GM12878 (cell line): ENCODE measurements at regions of chr19 and their contacts with region 1.

Region 1: DNA sequence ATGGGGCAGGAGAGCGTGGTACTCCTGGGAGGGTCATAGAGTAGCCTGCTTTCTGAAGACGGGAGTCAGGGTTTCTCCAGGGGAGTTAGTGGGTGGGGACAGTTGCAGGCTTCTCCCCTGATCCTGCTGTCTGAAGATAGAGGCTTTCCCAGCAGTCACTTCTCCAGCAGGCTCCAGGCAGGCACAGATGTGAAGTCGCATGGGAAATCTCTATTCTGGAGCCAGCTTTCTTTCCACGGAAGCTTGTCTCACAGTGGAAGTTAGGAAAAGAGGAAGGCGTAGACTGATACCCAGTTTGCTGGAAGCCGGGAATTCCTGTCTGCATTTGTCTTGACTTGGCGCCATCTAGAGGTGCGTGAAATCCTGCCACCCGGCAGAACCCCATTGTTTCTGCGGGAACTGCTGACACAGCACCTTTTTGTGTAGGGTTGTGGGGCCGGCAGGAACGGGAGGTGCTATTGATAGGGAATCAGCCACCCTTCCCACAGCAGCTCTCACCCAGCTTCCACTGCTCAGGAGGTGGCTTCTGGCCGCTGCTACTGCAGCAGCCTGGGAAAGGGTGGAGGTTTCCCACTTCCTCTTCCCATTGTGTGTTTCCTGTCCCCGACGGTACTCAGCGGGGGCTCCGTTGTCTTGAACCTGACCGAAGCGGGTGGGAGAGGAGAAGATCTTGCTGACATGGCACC is 28.5 kb upstream of the NPAS1 start:
- DNase-seq: peak; percentile 21
- ATAC-seq: peak; percentile 83
- H3K4me3 ChIP-seq: no peak overlapping the region
- H3K27ac ChIP-seq: no peak overlapping the region; the same call in 1 of the 2 replicates
- H3K4me1 ChIP-seq: peaks cover 10% of the 10 kb centered on the region
- H3K27me3 ChIP-seq: no peaks in the 10 kb centered on the region
- CTCF ChIP-seq: peak; percentile 72 to 96 (median 77)
- EP300 ChIP-seq: no peak
- POLR2A ChIP-seq: no peak
- RAD21 ChIP-seq: peak; percentile 87

Region 2: GRCh38 chr19:46860125-46860845 is 130.8 kb before region 1 on chr19:
- CTCF ChIA-PET with region 1: interaction called, 53 read pairs
- POLR2A ChIA-PET with region 1: interaction called, 7 read pairs
- RAD21 ChIA-PET with region 1: interaction called, 14 read pairs
- SMC1A ChIA-PET with region 1: interaction called, 33 read pairs
- in situ Hi-C with region 1: no loop called
- intact Hi-C with region 1: loop called (anchors 1 kb)
- DNase-seq: peak; percentile 92
- ATAC-seq: peak; percentile 89
- H3K4me3 ChIP-seq: peak overlapping the region; percentile 69
- H3K27ac ChIP-seq: peak overlapping the region; percentile 92
- H3K4me1 ChIP-seq: peaks cover 12% of the 10 kb centered on the region; the same call in 1 of the 2 replicates
- H3K27me3 ChIP-seq: no peaks in the 10 kb centered on the region
- CTCF ChIP-seq: no peak
- EP300 ChIP-seq: 0 out of 4 replicates have a peak, but pooled peaks of 1 of the 2 experiments have one; percentile 25
- POLR2A ChIP-seq: peak; percentile 90
- RAD21 ChIP-seq: no peak

Region 3: GRCh38 chr19:46866387-46867152 is 124.6 kb before region 1 on chr19:
- CTCF ChIA-PET with region 1: interaction called, 20 read pairs
- POLR2A ChIA-PET with region 1: interaction called, 3 read pairs
- RAD21 ChIA-PET with region 1: no interaction called
- SMC1A ChIA-PET with region 1: interaction called, 11 read pairs
- in situ Hi-C with region 1: no loop called
- intact Hi-C with region 1: no loop called
- DNase-seq: no peak
- ATAC-seq: no peak
- H3K4me3 ChIP-seq: 0 out of 2 replicates have a peak overlapping the region, but pooled peaks have one; percentile 19
- H3K27ac ChIP-seq: no peak overlapping the region
- H3K4me1 ChIP-seq: no peaks in the 10 kb centered on the region; the same call in 1 of the 2 replicates
- H3K27me3 ChIP-seq: no peaks in the 10 kb centered on the region
- CTCF ChIP-seq: no peak
- EP300 ChIP-seq: no peak
- POLR2A ChIP-seq: no peak
- RAD21 ChIP-seq: no peak

Region 4: DNA sequence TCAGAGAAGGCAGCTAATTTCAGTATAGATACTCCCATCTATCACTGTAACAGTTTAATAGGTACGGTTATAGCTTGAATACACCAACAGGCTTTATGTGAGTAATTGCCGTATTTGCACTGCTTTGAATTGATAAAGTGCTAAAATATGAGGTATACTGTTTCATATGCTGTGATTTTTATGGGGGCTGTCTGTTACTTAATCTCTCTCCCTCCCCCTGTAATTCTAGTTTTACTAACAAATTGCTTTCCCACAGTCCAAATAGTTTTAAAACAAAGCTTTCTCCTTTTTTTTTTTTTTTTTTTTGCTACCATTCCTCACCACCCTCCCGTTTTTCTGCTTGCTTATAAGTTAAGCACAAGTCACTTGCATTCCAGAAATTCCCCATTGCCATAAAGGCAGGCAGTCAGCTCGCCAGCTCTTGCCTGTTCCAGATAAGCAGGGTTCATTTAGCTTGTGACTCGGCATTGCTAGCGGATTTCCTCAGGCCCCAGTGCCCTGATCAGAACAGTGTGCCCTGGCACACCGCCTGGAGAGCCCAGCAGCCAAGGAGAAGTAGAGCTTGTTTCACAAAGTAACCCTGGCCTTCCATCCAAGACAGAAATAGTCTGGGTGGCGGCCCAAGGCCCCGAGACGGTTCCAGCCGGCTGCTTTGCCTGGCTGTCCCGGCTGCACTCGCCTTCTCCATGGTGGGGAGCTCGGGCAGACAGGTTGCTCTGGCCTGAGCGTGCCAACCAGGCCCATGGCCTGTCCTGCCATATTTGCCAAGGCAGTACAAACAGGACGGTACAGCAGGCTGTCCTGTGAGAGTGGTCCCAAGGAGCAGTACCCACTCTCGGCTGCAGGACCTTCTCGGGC is 15.0 kb before region 1 on chr19:
- CTCF ChIA-PET with region 1: interaction called, 11 read pairs
- POLR2A ChIA-PET with region 1: no interaction called
- RAD21 ChIA-PET with region 1: no interaction called
- SMC1A ChIA-PET with region 1: interaction called, 6 read pairs
- in situ Hi-C with region 1: no loop called
- intact Hi-C with region 1: no loop called
- DNase-seq: no peak
- ATAC-seq: no peak
- H3K4me3 ChIP-seq: no peak overlapping the region
- H3K27ac ChIP-seq: no peak overlapping the region
- H3K4me1 ChIP-seq: peaks cover 3% of the 10 kb centered on the region; the same call in 1 of the 2 replicates
- H3K27me3 ChIP-seq: no peaks in the 10 kb centered on the region
- CTCF ChIP-seq: no peak
- EP300 ChIP-seq: no peak
- POLR2A ChIP-seq: no peak
- RAD21 ChIP-seq: no peak

Region 5: DNA sequence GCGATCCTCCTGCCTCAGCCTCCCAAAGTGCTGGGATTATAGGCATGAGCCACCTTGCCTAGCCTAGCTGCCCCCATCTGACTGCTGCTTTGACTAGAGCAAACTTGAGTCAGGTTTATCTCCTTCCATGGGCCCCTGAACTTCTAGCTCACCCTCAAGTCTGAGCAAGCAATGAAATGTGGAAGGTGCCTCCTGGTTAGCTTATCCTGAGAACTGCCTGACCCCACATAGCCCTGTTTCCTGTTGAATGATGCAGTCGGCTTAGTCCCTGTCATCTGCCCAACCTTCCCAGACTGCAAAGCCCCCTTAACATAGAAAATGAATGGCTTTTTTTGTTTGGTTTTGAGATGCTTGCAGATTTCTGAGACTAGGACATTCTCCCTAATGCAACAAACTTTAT is 66.2 kb after region 1 on chr19:
- CTCF ChIA-PET with region 1: no interaction called
- POLR2A ChIA-PET with region 1: no interaction called
- RAD21 ChIA-PET with region 1: no interaction called
- SMC1A ChIA-PET with region 1: no interaction called
- in situ Hi-C with region 1: no loop called
- intact Hi-C with region 1: no loop called
- DNase-seq: no peak
- ATAC-seq: no peak
- H3K4me3 ChIP-seq: no peak overlapping the region
- H3K27ac ChIP-seq: no peak overlapping the region
- H3K4me1 ChIP-seq: no peaks in the 10 kb centered on the region
- H3K27me3 ChIP-seq: no peaks in the 10 kb centered on the region
- CTCF ChIP-seq: no peak
- EP300 ChIP-seq: no peak
- POLR2A ChIP-seq: no peak
- RAD21 ChIP-seq: no peak

Region 6: GRCh38 chr19:47152224-47153017 is 161.3 kb after region 1 on chr19:
- CTCF ChIA-PET with region 1: no interaction called
- POLR2A ChIA-PET with region 1: no interaction called
- RAD21 ChIA-PET with region 1: no interaction called
- SMC1A ChIA-PET with region 1: no interaction called
- in situ Hi-C with region 1: no loop called
- intact Hi-C with region 1: no loop called
- DNase-seq: no peak
- ATAC-seq: no peak
- H3K4me3 ChIP-seq: no peak overlapping the region
- H3K27ac ChIP-seq: no peak overlapping the region
- H3K4me1 ChIP-seq: peaks cover 14% of the 10 kb centered on the region
- H3K27me3 ChIP-seq: no peaks in the 10 kb centered on the region
- CTCF ChIP-seq: no peak
- EP300 ChIP-seq: no peak
- POLR2A ChIP-seq: no peak
- RAD21 ChIP-seq: no peak

Region 7: GRCh38 chr19:48170038-48170812 is 1179.1 kb after region 1 on chr19 and contains the starts of genes LIG1 and ZSWIM9:
- CTCF ChIA-PET with region 1: no interaction called
- POLR2A ChIA-PET with region 1: interaction called, 11 read pairs
- RAD21 ChIA-PET with region 1: no interaction called
- SMC1A ChIA-PET with region 1: no interaction called
- in situ Hi-C with region 1: no loop called
- intact Hi-C with region 1: no loop called
- DNase-seq: peak; percentile 71
- ATAC-seq: peak; percentile 97
- H3K4me3 ChIP-seq: peak within 1 kb of the TSS; percentile 99
- H3K27ac ChIP-seq: peak within 1 kb of the TSS; percentile 99
- H3K4me1 ChIP-seq: peaks cover 19% of the 10 kb centered on the region
- H3K27me3 ChIP-seq: no peaks in the 10 kb centered on the region
- CTCF ChIP-seq: no peak
- EP300 ChIP-seq: 0 out of 4 replicates have a peak, but pooled peaks of 1 of the 2 experiments have one; percentile 28
- POLR2A ChIP-seq: peak; percentile 88
- RAD21 ChIP-seq: no peak
- polyA plus RNA-seq, gene LIG1: 7.8 to 31.6 TPM
- polyA plus RNA-seq, gene ZSWIM9: 0.29 TPM in 1 of 2 experiments, not detected in the other